Posterior cingulate gyrus (tissue), 11 donors: ENCODE measurements at regions of chr18 and their contacts with region 1.

Region 1: DNA sequence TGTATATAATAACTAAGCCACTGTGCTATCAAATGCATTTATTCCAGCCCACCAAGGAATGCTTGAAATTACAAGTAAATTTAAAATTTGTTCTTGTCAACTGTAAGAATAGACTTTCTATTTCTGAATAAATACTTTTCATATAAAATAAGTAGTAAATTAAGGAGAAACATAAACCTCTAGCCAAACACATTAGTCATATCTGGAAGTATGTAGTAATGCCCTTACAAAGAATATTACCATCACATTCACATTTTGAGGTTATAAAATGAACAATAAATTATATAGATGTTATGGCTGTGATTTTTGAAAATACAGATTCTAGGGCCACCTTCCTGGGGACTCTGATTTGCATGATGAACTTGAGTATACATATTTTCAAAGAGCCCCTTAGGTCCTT is 54.7 kb downstream of the SERPINB7 start:
- DNase-seq: no peak

Region 2: DNA sequence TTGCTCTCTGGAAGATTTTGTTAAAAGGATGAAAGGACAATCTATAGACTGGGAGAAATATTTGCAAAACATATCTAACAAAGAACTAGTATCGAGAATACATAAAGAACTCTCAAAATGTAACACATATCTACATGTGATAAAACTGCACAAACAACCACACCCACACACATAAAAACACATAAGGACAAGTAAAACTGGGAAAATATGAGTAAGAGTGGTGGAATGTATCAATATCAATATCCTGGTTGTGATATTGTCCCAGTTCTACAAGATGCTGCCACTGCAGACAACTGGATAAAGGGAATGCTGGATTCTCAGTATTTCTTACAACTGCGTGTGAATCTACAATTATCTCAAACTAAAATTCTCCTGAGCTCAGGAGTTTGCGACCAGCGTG is 416.9 kb before region 1 on chr18:
- intact Hi-C with region 1: no loop called
- DNase-seq: no peak

Region 3: GRCh38 chr18:63539904-63540510 is 289.9 kb before region 1 on chr18:
- intact Hi-C with region 1: no loop called
- DNase-seq: no peak

Region 4: GRCh38 chr18:63775166-63775730 is 54.6 kb before region 1 on chr18 and contains the start of gene SERPINB7:
- intact Hi-C with region 1: no loop called
- DNase-seq: no peak

Region 5: DNA sequence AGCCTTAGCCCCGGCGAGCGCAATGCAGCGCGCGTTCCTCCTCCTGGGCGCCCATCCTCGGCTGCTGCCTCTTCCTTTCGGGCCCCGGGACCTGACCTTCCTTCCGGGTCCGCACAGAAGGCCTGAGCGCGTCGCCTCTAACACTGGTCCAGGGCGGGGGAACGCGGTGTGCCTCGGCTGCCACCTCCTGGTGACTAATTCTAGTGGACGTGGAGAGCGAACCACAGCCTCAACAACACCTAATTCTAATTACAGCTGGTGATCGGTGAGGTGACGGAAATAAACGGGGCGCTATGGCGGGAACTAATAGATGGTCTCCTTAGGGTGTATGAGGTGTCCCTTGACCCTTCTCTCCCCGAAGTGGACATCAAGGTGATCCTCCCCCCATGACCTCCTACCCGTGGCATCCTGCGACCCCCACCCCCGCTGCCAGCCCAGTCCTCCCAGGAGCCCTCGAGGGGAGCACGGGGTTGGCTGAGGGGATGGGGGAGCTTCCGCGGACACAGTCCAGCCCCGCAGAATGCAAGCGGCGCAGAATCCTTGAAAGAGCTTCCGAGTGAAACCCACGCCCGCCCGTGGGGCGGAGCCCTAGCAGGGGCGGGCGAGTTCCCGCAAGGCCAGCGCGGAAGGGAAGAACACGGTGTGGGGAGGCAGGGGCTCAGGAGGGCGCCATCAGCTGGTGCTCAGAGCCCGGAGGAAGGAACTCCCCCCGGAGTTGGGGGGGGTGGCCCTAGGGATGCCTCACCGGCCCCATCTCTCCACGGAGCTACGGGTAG is 106.5 kb after region 1 on chr18:
- intact Hi-C with region 1: loop called (anchors 5 kb)
- DNase-seq: peak; percentile 36 to 95 (median 76)

Region 6: GRCh38 chr18:63979409-63979920 is 149.6 kb after region 1 on chr18:
- intact Hi-C with region 1: loop called (anchors 5 kb)
- DNase-seq: peak in 4 of 10 donors; percentile 31 to 50 (median 39)